ENCODE measurements at regions of chr16 and their contacts with region 1.

Region 1: DNA sequence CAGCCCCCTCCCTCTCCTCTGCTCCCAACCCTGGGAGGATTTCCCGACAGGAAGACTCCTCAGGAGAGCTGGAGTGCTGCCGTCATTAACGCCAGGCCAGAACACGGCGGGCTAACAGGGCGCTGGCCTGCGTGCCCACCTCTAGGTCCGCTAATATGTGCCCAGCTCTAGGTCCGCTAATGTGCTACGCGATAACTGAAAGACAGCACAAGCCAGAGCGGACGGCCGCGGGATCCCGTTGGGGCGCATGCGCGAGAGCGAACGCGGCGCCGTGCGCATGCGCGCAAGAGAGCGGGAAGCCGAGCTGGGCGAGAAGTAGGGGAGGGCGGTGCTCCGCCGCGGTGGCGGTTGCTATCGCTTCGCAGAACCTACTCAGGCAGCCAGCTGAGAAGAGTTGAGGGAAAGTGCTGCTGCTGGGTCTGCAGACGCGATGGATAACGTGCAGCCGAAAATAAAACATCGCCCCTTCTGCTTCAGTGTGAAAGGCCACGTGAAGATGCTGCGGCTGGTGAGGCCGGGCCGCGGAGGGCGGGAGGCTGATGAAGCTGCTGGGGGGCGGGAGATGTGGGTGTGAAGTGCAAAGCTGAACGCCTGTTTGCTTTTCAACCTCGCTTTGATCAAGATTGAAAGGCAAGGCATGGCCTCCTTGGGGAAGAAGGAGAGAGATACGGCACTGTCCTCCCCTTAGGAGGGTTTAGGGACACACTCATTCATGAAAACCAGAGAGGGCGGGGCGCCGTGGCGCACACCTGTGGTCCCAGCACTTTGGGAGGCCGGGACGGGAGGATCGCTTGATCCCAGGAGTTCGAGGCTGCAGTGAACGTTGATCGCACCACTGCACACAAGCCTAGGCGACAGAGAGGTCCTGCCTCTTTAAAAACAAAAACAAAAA is at the start of gene CKLF:
- DNase-seq: peak; percentile 93
- H3K4me3 ChIP-seq: peak within 1 kb of the TSS; percentile 75
- H3K27ac ChIP-seq: peak within 1 kb of the TSS; percentile 68
- H3K4me1 ChIP-seq: peaks cover 70% of the 10 kb centered on the region
- CTCF ChIP-seq: no peak
- total RNA-seq, gene CKLF: 56.6 and 58.3 TPM in 2 replicates

Region 2: GRCh38 chr16:66483689-66484481 is 68.6 kb before region 1 on chr16:
- CTCF ChIA-PET with region 1: no interaction called
- POLR2A ChIA-PET with region 1: no interaction called
- intact Hi-C with region 1: loop called (anchors 2 kb)
- DNase-seq: peak; percentile 77
- H3K4me3 ChIP-seq: no peak overlapping the region
- H3K27ac ChIP-seq: no peak overlapping the region
- H3K4me1 ChIP-seq: peaks cover 6% of the 10 kb centered on the region
- CTCF ChIP-seq: peak; percentile 99

Region 3: DNA sequence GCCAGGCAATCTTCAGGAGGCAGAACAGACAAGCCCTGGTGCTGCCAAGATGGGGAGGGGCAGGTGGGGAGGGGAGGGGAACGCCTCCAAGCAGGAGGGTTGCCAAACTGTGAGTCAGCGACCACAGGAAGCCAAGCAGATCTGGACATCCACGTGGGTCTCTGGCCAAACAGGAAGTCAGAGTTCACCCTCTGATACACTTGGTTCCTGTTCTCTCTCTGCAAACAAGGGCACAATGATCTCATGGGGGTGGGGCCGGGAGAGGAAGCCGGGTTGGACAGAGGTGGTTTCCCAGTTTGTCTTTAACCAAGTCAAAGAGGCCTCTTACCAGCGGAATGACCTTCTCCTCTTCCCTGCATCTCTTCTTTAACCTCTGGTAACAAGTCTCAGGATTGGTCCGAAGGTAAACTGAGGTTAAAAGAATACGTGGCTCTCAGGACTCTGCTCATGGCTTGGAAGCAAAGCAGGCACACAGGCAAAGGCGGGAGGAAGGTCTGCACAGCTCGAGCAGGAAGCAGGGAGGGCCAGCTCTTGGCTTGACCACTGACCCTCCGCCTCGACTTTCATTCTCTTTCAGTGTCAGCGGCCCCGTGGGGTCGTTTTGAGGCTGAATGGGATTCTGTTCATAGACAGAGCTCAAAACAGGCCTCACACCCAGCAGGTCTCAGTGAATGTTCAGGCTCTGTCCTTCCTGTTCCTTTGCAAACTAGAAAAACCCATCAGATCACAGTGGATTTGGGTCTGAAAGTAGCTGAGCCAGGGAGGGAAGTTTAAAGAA is 35.5 kb before region 1 on chr16:
- CTCF ChIA-PET with region 1: interaction called, 3 read pairs
- POLR2A ChIA-PET with region 1: interaction called, 16 read pairs
- intact Hi-C with region 1: loop called (anchors 1 kb)
- DNase-seq: peak; percentile 95
- H3K4me3 ChIP-seq: peak overlapping the region; percentile 58
- H3K27ac ChIP-seq: peak overlapping the region; percentile 68
- H3K4me1 ChIP-seq: peaks cover 39% of the 10 kb centered on the region
- CTCF ChIP-seq: no peak

Region 4: GRCh38 chr16:66521951-66522771 is 30.4 kb before region 1 on chr16:
- CTCF ChIA-PET with region 1: interaction called, 3 read pairs
- POLR2A ChIA-PET with region 1: interaction called, 16 read pairs
- intact Hi-C with region 1: loop called (anchors 2 kb)
- DNase-seq: peak; percentile 14
- H3K4me3 ChIP-seq: no peak overlapping the region
- H3K27ac ChIP-seq: no peak overlapping the region
- H3K4me1 ChIP-seq: peaks cover 64% of the 10 kb centered on the region
- CTCF ChIP-seq: no peak

Region 5: DNA sequence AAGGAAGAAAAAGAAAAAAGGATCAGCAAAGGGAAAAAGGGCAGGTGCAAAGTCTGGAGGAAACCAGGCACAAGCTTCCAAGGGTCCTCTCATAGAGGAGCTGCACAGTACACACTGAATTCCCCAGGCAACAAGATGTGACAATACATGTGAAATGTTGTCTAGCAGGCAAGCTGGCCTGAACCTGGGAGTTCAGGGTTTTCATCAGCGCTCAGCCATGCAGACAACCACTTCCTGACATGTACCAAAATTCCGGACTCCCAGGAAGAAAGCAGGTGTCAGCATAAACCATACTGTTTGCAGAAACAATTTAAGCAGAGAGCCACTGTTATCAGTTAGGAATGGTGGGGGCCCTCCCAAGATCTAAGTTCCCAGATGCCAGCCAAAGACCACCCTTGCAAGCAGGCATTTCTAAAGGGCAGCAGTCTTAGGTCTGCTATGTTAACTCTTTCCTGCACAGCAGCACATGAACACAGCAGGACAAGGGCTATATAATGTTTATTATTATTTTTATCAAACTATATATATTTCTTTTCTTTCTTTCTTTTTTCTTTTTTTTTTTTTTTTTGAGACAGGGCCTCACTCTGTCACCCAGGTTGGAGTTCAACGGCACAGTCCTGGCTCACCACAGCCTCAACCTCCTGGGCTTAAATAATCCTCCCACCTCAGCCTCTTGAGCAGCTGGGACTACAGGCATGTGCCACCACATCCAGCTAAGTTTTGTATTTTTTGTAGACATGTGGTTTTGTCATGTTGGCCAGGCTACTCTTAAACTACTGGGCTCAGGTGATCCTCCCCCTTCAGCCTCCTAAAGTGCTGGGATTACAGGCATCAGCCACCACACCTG is 12.7 kb before region 1 on chr16:
- CTCF ChIA-PET with region 1: interaction called, 3 read pairs
- POLR2A ChIA-PET with region 1: interaction called, 23 read pairs
- intact Hi-C with region 1: no loop called
- DNase-seq: peak; percentile 77
- H3K4me3 ChIP-seq: peak overlapping the region; percentile 12
- H3K27ac ChIP-seq: no peak overlapping the region
- H3K4me1 ChIP-seq: peaks cover 34% of the 10 kb centered on the region
- CTCF ChIP-seq: no peak

Region 6: DNA sequence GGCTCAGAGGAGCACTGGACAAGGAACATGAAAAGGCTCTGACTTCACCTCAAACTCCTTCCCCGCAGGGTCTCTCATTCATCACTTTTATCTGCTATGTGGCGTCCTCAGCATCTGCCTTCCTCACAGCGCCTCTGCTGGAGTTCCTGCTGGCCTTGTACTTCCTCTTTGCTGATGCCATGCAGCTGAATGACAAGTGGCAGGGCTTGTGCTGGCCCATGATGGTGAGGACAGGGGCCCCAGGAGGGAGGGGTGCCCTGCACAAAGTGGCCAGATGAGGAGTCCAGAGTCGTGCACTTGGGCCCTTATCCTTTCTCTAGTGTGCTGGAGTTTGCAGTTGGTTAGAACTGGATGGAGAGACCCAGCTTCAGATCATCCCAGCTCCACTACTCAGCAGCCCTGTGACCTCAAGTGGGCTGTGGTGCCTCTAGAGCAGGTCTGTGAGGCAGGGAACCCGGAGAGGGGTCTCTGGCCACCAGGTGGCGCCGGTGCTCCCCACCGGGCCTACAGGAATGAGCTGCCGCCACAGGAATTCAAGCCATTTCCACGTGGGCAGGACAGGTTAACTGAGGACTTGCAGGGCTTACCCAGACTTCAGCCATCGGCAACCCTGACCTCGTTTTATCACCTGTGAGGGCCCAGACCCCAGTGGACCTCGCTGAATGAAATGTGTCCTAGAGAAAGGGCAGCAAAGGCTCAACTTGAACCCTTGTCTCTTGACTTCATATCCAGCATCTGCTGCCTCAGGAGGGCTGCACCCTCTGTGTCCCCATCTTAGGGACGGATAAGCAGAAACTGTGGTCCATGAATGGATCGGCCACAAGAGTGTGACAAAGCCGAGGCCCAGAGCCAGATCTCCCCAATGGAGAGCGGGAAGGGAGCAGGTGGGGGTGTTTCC is 56.0 kb after region 1 on chr16:
- CTCF ChIA-PET with region 1: no interaction called
- POLR2A ChIA-PET with region 1: no interaction called
- intact Hi-C with region 1: loop called (anchors 5 kb)
- DNase-seq: peak; percentile 83
- H3K4me3 ChIP-seq: no peak overlapping the region
- H3K27ac ChIP-seq: peak overlapping the region; percentile 45
- H3K4me1 ChIP-seq: peaks cover 40% of the 10 kb centered on the region
- CTCF ChIP-seq: peak; percentile 98

Region 7: GRCh38 chr16:66776457-66776856 is 223.9 kb after region 1 on chr16:
- CTCF ChIA-PET with region 1: no interaction called
- POLR2A ChIA-PET with region 1: no interaction called
- intact Hi-C with region 1: no loop called
- DNase-seq: no peak
- H3K4me3 ChIP-seq: no peak overlapping the region
- H3K27ac ChIP-seq: no peak overlapping the region
- H3K4me1 ChIP-seq: no peaks in the 10 kb centered on the region
- CTCF ChIP-seq: no peak